Activated T-helper 2 cell treated with anti-CD3 and anti-CD28 coated beads, Interferon-gamma antibody, Interleukin-2, Interleukin-4, amounts not matched to agents 10 μg/mL and 5 μg/mL and 100 μg/mL, durations not matched to agents 14 hours and 24 hours and 36 hours (primary cell): ENCODE measurements at regions of chr1 and their contacts with region 1.

Region 1: DNA sequence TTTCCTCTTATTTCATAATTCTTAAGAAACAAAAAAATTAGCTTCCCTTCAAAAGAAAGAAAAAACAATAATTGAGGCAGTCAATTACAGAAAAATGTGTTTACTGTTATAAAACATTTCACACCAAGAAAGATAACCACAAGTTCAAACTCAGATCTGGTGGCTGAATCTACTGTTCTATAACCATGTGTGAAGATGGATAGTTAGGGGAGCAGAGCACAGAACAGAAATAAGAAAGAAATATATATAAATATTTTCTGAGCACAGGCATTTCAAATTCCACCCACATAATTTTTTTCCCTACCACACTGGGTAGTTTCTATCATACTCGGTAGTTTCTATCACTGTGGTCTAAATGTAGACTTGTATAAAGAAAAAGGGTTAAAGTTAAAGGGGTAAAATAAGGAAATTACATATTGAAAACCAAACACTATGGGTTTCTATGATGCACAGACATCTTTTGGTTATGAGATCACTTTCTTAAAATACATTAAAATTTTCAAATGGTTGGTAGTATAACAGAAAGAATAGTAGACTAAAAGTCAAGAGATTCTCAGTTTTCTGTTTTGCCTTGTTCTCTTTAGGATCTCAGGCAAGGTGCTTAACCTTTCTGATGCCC is 10.8 kb downstream of the LYST start:
- DNase-seq: no peak
- H3K4me3 Mint-ChIP-seq: no peak overlapping the region
- H3K27ac Mint-ChIP-seq: peak overlapping the region; percentile 86
- H3K4me1 Mint-ChIP-seq: peaks cover 48% of the 10 kb centered on the region
- H3K27me3 Mint-ChIP-seq: no peaks in the 10 kb centered on the region

Region 2: DNA sequence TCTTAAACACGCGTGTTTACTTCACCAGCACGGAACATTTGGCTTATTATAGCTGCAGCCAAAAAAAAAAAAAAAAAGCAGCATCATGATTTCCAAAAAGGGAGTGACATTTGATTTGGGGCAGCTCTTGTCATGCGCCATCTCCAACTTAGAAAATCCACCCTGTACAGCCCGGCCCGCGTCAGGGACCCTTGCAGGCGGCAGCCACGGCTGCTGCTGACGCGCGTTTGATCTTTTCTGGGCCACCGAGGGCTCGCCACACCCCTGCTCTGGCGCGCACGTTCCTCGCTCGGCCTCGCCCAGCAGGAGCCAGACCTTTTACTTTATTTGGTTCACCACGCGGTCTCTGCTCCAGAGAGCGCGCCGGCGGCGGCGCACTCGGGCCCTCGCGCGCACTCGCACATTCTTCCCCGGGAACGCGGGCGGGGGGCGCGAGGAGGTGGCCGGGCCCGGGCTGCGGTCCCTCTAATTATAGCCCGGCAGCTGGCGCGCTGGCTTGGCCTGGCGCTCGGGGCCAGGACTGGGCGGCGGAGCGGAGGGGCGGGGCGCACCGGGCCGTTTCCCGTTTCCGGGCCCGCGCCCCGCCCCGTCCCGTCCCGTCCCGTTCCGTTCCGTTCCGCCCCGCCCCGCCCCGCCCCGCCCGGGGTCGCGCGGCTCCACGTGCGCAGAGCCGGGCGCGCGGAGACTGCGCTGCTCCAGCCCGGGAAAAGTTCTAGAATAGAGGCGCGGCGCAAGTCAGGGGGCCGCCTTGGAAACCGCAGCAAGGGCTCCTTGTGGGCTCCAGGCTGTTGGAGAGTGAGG is 1256.1 kb before region 1 on chr1:
- intact Hi-C with region 1: loop called (anchors 5 kb)
- DNase-seq: peak; percentile 70
- H3K4me3 Mint-ChIP-seq: peak overlapping the region; percentile 82
- H3K27ac Mint-ChIP-seq: peak overlapping the region; percentile 92
- H3K4me1 Mint-ChIP-seq: peaks cover 53% of the 10 kb centered on the region
- H3K27me3 Mint-ChIP-seq: no peaks in the 10 kb centered on the region

Region 3: GRCh38 chr1:235642011-235642942 is 213.6 kb before region 1 on chr1:
- intact Hi-C with region 1: loop called (anchors 5 kb)
- DNase-seq: peak; percentile 75
- H3K4me3 Mint-ChIP-seq: peak overlapping the region; percentile 65
- H3K27ac Mint-ChIP-seq: peak overlapping the region; percentile 95
- H3K4me1 Mint-ChIP-seq: peaks cover 73% of the 10 kb centered on the region
- H3K27me3 Mint-ChIP-seq: peaks cover 11% of the 10 kb centered on the region

Region 4: GRCh38 chr1:235843461-235843961 is 12.4 kb before region 1 on chr1:
- intact Hi-C with region 1: loop called (anchors 1 kb)
- DNase-seq: no peak
- H3K4me3 Mint-ChIP-seq: no peak overlapping the region
- H3K27ac Mint-ChIP-seq: no peak overlapping the region
- H3K4me1 Mint-ChIP-seq: peaks cover 55% of the 10 kb centered on the region
- H3K27me3 Mint-ChIP-seq: no peaks in the 10 kb centered on the region

Region 5: GRCh38 chr1:235873045-235873444 is 17.1 kb after region 1 on chr1:
- intact Hi-C with region 1: loop called (anchors 1 kb)
- DNase-seq: no peak
- H3K4me3 Mint-ChIP-seq: peak overlapping the region; percentile 70
- H3K27ac Mint-ChIP-seq: peak overlapping the region; percentile 98
- H3K4me1 Mint-ChIP-seq: peaks cover 61% of the 10 kb centered on the region
- H3K27me3 Mint-ChIP-seq: no peaks in the 10 kb centered on the region

Region 6: GRCh38 chr1:235954306-235955283 is 98.7 kb after region 1 on chr1:
- intact Hi-C with region 1: loop called (anchors 2 kb)
- DNase-seq: peak; percentile 15
- H3K4me3 Mint-ChIP-seq: no peak overlapping the region
- H3K27ac Mint-ChIP-seq: no peak overlapping the region
- H3K4me1 Mint-ChIP-seq: peaks cover 33% of the 10 kb centered on the region
- H3K27me3 Mint-ChIP-seq: no peaks in the 10 kb centered on the region

Region 7: DNA sequence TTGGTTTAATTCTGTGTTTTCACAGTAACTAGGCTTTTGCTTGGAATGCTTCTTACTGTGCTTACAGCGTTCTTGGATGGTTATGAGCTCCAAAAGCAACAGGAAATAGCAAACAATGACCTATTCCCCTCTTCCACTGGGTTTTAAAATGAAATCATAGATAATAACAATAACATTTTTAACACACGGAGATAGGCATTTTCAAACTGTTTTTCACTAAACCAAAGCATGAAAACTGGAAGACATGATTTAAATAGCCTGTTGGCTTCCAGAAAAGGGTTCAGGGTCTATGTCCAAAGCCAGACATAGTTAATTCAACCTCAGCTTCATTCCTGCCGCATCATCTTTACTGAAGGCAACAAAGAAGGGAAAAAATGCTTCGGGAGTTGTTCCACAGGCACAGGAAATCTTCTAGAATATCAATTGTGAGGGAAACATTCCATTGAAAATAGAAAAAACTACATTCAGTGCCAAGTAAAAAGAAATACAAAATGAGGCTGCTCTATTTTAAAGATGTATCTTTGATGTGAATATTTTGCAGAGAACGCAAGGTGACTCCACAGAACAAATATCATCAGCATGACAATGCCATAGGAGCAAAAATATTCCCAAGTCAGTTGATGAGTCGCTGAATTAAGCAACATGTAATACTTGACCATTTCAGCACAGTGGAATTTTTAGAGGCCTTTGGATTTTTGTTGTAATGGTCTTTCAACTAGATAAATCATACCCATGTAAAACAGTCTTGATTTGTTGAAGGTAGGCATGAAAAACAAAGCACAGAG is 128.3 kb after region 1 on chr1:
- intact Hi-C with region 1: no loop called
- DNase-seq: no peak
- H3K4me3 Mint-ChIP-seq: no peak overlapping the region
- H3K27ac Mint-ChIP-seq: no peak overlapping the region
- H3K4me1 Mint-ChIP-seq: peaks cover 2% of the 10 kb centered on the region
- H3K27me3 Mint-ChIP-seq: peaks cover 18% of the 10 kb centered on the region